Gastrocnemius medialis (tissue), 4 donors: ENCODE measurements at regions of chr16 and their contacts with region 1.

Region 1: GRCh38 chr16:73172241-73172972 is 124.5 kb upstream of the ZFHX3 start:
- DNase-seq: peak in 1 of 2 donors; percentile 38
- ATAC-seq: peak; percentile 56 to 71
- H3K4me3 ChIP-seq: no peak overlapping the region
- H3K27ac ChIP-seq: peak overlapping the region; percentile 49 to 63 (median 60)
- H3K4me1 ChIP-seq: peaks cover 10 to 18% of the 10 kb centered on the region in 2 donors
- H3K27me3 ChIP-seq: peaks cover 0 to 3% (median 0%) of the 10 kb centered on the region in 3 donors
- CTCF ChIP-seq: no peak
- POLR2A ChIP-seq: no peak

Region 2: GRCh38 chr16:73093146-73094144 is 79.0 kb before region 1 on chr16:
- in situ Hi-C with region 1: loop called in 1 of 4 experiments (anchors 25 kb)
- intact Hi-C with region 1: loop called (anchors 5 kb)
- DNase-seq: peak in 1 of 2 donors; percentile 51
- ATAC-seq: peak; percentile 57 to 60
- H3K4me3 ChIP-seq: peak overlapping the region; percentile 23 to 39 (median 32)
- H3K27ac ChIP-seq: peak overlapping the region; percentile 53 to 84 (median 62)
- H3K4me1 ChIP-seq: peaks cover 15 to 29% of the 10 kb centered on the region in 2 donors
- H3K27me3 ChIP-seq: no peaks in the 10 kb centered on the region
- CTCF ChIP-seq: no peak
- POLR2A ChIP-seq: no peak

Region 3: DNA sequence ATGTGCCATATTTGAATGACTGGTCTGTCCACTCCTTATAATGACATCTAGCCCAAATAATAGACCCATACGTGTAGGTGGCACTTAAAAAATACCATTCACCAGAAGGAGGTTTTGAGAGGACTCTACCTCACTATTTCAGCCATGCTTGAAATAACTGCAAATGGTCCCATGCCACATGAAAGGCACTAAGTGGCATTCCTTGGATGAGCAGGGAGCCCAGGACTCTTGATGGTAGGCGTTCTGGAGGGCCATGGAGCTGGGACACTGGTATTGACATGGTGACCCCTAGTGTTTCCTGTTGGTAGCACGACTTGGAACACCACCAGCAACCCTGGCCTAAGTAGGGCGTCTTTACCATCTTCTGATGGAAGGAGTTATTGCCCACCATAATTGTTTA is 24.3 kb after region 1 on chr16:
- in situ Hi-C with region 1: no loop called
- intact Hi-C with region 1: no loop called
- DNase-seq: peak; percentile 51 to 80
- ATAC-seq: peak; percentile 91 to 99
- H3K4me3 ChIP-seq: no peak overlapping the region
- H3K27ac ChIP-seq: no peak overlapping the region
- H3K4me1 ChIP-seq: peaks cover 0 to 3% of the 10 kb centered on the region in 2 donors
- H3K27me3 ChIP-seq: no peaks in the 10 kb centered on the region
- CTCF ChIP-seq: peak; percentile 68 to 79 (median 73)
- POLR2A ChIP-seq: no peak